Endothelial cell of umbilical vein (primary cell): ENCODE measurements at regions of chr2 and their contacts with region 1.

Region 1: DNA sequence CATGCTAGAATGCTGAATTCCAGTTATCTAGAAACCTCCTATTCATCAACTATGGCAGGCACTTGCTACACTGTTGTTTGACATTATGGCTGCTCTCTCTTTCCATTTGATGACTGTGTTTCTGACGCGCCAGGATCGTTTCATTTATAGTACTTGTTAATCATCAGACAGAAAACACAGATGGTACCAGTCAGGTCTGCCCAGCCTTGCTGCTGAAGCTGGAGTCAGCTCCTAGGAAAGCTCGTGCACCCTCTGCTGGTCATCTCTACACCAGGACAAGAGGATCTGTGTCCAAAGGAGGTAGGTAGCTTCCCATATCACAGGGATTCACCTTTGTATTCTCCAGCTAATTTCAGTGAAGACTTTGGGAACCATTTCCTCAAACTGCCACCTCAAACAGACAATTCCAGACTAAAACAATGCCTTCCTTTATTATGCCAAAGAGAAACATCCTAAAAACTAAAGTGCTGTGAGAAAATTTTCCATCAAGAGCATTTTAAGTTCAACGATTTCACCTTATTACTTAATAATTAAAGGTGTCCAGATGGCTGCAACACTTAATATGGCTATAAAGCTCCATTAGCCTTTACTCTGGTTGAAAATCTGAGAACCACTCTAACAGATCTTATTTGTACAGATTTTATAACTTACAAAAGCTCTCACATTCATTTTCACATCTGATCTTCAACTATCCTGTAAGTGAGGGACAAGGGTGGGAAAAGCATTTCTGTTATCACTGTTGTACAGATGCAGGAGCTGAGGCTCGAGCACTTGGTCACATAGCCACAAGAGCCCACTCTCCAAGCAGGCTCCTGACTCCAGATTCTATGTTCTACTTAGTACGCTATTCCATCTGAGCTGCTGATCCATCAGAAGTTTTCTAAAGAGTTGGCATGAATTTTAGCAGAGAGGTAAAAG is 17.5 kb downstream of the METTL8 start:
- DNase-seq: peak; percentile 95
- H3K4me3 ChIP-seq: no peak overlapping the region
- H3K27ac ChIP-seq: no peak overlapping the region
- H3K4me1 ChIP-seq: peaks cover 13% of the 10 kb centered on the region
- H3K27me3 ChIP-seq: no peaks in the 10 kb centered on the region
- CTCF ChIP-seq: peak; percentile 84 to 85
- POLR2A ChIP-seq: no peak

Region 2: GRCh38 chr2:170973492-170974303 is 442.6 kb before region 1 on chr2:
- CTCF ChIA-PET with region 1: interaction called, 86 read pairs
- POLR2A ChIA-PET with region 1: interaction called, 3 read pairs
- dilution Hi-C with region 1: no loop called
- intact Hi-C with region 1: loop called (anchors 1 kb)
- DNase-seq: peak; percentile 85
- H3K4me3 ChIP-seq: peak overlapping the region; percentile 54 to 74 (median 69)
- H3K27ac ChIP-seq: peak overlapping the region; percentile 79
- H3K4me1 ChIP-seq: peaks cover 8% of the 10 kb centered on the region
- H3K27me3 ChIP-seq: no peaks in the 10 kb centered on the region
- CTCF ChIP-seq: peak; percentile 83 to 98
- POLR2A ChIP-seq: peak; percentile 67

Region 3: DNA sequence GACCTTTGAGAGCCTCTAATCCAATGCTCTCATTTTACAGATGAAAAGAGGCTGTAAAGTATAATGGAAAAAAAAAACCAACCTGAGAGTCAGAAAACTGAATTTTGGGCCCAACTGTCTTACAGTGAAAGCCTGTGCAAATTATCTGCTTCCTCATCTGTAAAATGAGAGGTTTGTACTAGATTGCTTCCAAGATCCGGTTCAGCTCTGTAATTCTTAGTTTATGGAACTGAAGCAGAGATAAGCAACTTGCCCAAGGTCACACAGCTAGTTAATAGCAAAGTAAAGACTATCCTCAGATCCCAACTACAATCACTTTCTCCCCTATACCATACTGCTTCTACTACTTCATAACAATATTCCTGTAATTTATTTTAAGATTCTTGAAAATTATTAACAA is 261.9 kb before region 1 on chr2:
- CTCF ChIA-PET with region 1: interaction called, 81 read pairs
- POLR2A ChIA-PET with region 1: no interaction called
- dilution Hi-C with region 1: no loop called
- intact Hi-C with region 1: loop called (anchors 1 kb)
- DNase-seq: peak; percentile 42
- H3K4me3 ChIP-seq: no peak overlapping the region
- H3K27ac ChIP-seq: no peak overlapping the region
- H3K4me1 ChIP-seq: peaks cover 19% of the 10 kb centered on the region
- H3K27me3 ChIP-seq: no peaks in the 10 kb centered on the region
- CTCF ChIP-seq: no peak
- POLR2A ChIP-seq: no peak

Region 4: GRCh38 chr2:171317492-171318125 is 98.7 kb before region 1 on chr2:
- CTCF ChIA-PET with region 1: interaction called, 12 read pairs
- POLR2A ChIA-PET with region 1: no interaction called
- dilution Hi-C with region 1: no loop called
- intact Hi-C with region 1: loop called (anchors 2 kb)
- DNase-seq: no peak
- H3K4me3 ChIP-seq: no peak overlapping the region
- H3K27ac ChIP-seq: no peak overlapping the region
- H3K4me1 ChIP-seq: peaks cover 24% of the 10 kb centered on the region
- H3K27me3 ChIP-seq: no peaks in the 10 kb centered on the region
- CTCF ChIP-seq: no peak
- POLR2A ChIP-seq: no peak

Region 5: GRCh38 chr2:171433763-171434670 is 17.7 kb after region 1 on chr2 and contains the starts of genes DCAF17 and METTL8:
- CTCF ChIA-PET with region 1: interaction called, 16 read pairs
- POLR2A ChIA-PET with region 1: interaction called, 5 read pairs
- dilution Hi-C with region 1: no loop called
- intact Hi-C with region 1: no loop called
- DNase-seq: peak; percentile 97
- H3K4me3 ChIP-seq: peak within 1 kb of the TSS; percentile 76 to 87 (median 85)
- H3K27ac ChIP-seq: peak within 1 kb of the TSS; percentile 95
- H3K4me1 ChIP-seq: peaks cover 14% of the 10 kb centered on the region
- H3K27me3 ChIP-seq: no peaks in the 10 kb centered on the region
- CTCF ChIP-seq: peak; percentile 7 to 35
- POLR2A ChIP-seq: peak; percentile 84
- total RNA-seq, gene DCAF17: 14.9 and 15.0 TPM in 2 replicates
- total RNA-seq, gene METTL8: 20.2 and 25.0 TPM in 2 replicates

Region 6: GRCh38 chr2:171670655-171671054 is 254.4 kb after region 1 on chr2:
- CTCF ChIA-PET with region 1: no interaction called
- POLR2A ChIA-PET with region 1: no interaction called
- dilution Hi-C with region 1: no loop called
- intact Hi-C with region 1: no loop called
- DNase-seq: no peak
- H3K4me3 ChIP-seq: no peak overlapping the region
- H3K27ac ChIP-seq: no peak overlapping the region
- H3K4me1 ChIP-seq: no peaks in the 10 kb centered on the region
- H3K27me3 ChIP-seq: peaks cover 5 to 11% of the 10 kb centered on the region in 2 experiments
- CTCF ChIP-seq: no peak
- POLR2A ChIP-seq: no peak